A673 (cell line): ENCODE measurements at regions of chr1 and their contacts with region 1.

Region 1: GRCh38 chr1:159239551-159240220 is 35.0 kb downstream of the ACKR1 start:
- DNase-seq: no peak
- H3K4me3 ChIP-seq: no peak overlapping the region
- H3K27ac ChIP-seq: no peak overlapping the region
- H3K4me1 ChIP-seq: no peaks in the 10 kb centered on the region
- H3K27me3 ChIP-seq: no peaks in the 10 kb centered on the region
- CTCF ChIP-seq: no peak

Region 2: GRCh38 chr1:159261721-159262487 is 22.2 kb after region 1 on chr1:
- CTCF ChIA-PET with region 1: no interaction called
- POLR2A ChIA-PET with region 1: interaction called, 14 read pairs
- intact Hi-C with region 1: no loop called
- DNase-seq: no peak
- H3K4me3 ChIP-seq: no peak overlapping the region
- H3K27ac ChIP-seq: no peak overlapping the region
- H3K4me1 ChIP-seq: no peaks in the 10 kb centered on the region
- H3K27me3 ChIP-seq: peaks cover 3% of the 10 kb centered on the region
- CTCF ChIP-seq: no peak